ENCODE measurements at regions of chr2 and their contacts with region 1.

Region 1: GRCh38 chr2:9333591-9334171 is 89.6 kb downstream of the ITGB1BP1 start:
- DNase-seq: peak; percentile 70 to 83
- ATAC-seq: peak; percentile 96
- H3K4me3 ChIP-seq: no peak overlapping the region
- H3K27ac ChIP-seq: peak overlapping the region; percentile 27 to 51; a peak in 3 of 6 replicates
- H3K4me1 ChIP-seq: peaks cover 15% of the 10 kb centered on the region
- CTCF ChIP-seq: peak; percentile 88
- EP300 ChIP-seq: no peak
- POLR2A ChIP-seq: no peak
- RAD21 ChIP-seq: peak; percentile 92 to 93

Region 2: DNA sequence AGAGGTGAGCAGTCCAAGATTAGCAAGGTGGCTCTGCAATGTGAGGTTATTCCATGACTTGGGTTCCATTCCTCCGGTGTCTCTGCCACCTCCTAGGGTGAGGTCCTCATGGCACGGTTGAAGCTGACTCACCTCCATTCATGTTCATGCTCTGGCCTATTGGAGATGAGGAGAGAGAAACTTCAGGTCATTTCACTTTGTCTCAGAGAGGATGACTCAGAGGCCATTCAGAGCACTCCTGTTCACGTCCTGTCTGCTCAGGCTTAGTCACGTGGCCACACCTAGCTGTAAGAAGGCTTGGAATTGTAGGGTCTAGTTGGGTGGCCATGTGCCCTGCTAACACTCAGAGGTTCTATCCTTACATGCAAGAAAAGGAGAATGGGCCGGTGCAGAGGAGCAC is 262.6 kb before region 1 on chr2:
- CTCF ChIA-PET with region 1: no interaction called
- POLR2A ChIA-PET with region 1: no interaction called
- DNase-seq: peak; percentile 86 to 96
- ATAC-seq: peak; percentile 98
- H3K4me3 ChIP-seq: no peak overlapping the region
- H3K27ac ChIP-seq: peak overlapping the region; percentile 75 to 84
- H3K4me1 ChIP-seq: peaks cover 21% of the 10 kb centered on the region
- CTCF ChIP-seq: no peak
- EP300 ChIP-seq: peak in 1 of 2 experiments; percentile 30; a peak in 1 of 5 replicates
- POLR2A ChIP-seq: no peak
- RAD21 ChIP-seq: no peak

Region 3: DNA sequence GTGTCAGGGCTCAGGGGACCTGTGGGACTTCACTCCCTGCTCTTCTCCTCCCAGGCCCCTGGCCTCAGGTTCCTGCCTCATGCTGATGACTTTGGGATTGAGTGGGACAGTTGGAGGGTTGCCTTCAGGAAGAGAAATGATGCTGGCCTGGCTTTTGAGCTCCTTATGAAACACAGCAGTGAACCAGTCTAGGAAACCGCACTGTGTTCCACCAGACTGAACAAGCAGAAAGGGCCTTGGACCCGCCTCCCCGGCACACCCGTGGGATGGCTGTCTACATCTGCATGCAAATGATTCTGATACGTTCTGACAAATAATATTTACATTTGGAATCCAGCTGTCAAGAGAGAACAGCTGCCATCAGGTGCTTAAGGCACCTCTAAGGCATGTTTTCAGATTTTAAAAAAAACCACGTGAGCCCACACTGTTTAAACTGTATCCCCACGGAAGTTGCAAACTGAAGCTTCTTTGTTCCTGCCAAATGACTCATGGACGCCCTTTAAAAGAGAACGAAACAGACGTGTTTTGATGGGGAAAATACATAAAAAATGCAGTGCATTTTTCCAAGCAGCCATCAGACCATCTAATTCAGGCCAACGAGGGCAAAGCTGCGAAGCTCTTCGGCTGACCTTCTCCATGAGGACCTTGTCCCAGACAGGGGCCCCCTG is 154.6 kb before region 1 on chr2:
- CTCF ChIA-PET with region 1: interaction called, 10 read pairs
- POLR2A ChIA-PET with region 1: no interaction called
- DNase-seq: peak in 1 of 2 experiments; percentile 26
- ATAC-seq: peak; percentile 27 to 56; a peak in 4 of 6 replicates
- H3K4me3 ChIP-seq: no peak overlapping the region
- H3K27ac ChIP-seq: peak overlapping the region; percentile 37 to 50; a peak in 5 of 6 replicates
- H3K4me1 ChIP-seq: peaks cover 23% of the 10 kb centered on the region
- CTCF ChIP-seq: no peak
- EP300 ChIP-seq: no peak
- POLR2A ChIP-seq: no peak
- RAD21 ChIP-seq: no peak

Region 4: GRCh38 chr2:9287400-9288043 is 46.2 kb before region 1 on chr2:
- CTCF ChIA-PET with region 1: interaction called, 20 read pairs
- POLR2A ChIA-PET with region 1: no interaction called
- DNase-seq: peak; percentile 94 to 99
- ATAC-seq: peak; percentile 94 to 95
- H3K4me3 ChIP-seq: no peak overlapping the region; the same call in 1 of the 3 replicates
- H3K27ac ChIP-seq: peak overlapping the region; percentile 86 to 87
- H3K4me1 ChIP-seq: peaks cover 58% of the 10 kb centered on the region
- CTCF ChIP-seq: peak; percentile 21; the same call in 1 of the 3 replicates
- EP300 ChIP-seq: peak; percentile 52 to 61; a peak in 2 of 5 replicates
- POLR2A ChIP-seq: no peak
- RAD21 ChIP-seq: peak in 1 of 2 experiments; percentile 41; a peak in 4 of 5 replicates

Region 5: DNA sequence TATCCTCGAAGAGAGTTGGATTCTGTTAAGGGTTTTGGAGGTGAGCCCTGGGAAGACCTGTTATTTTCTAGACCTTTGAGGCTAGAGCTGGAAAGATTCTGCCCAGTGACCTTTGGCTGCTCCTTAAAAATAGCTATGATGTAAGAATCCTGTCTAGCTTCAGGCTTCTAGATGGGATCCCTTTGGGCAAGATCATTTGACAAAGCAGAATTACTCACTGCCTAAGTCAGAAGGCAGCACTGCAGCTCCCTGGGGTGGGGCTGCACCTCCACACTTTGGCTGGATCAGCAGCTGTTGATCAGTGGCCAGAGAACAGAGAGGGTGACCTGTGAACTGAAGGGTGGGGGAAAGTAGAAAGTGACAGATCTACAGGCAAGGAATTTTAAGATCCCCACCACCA is 23.3 kb before region 1 on chr2:
- CTCF ChIA-PET with region 1: interaction called, 24 read pairs
- POLR2A ChIA-PET with region 1: interaction called, 5 read pairs
- DNase-seq: peak; percentile 66 to 81
- ATAC-seq: peak; percentile 89 to 91
- H3K4me3 ChIP-seq: no peak overlapping the region
- H3K27ac ChIP-seq: peak overlapping the region; percentile 67 to 86
- H3K4me1 ChIP-seq: peaks cover 55% of the 10 kb centered on the region
- CTCF ChIP-seq: no peak
- EP300 ChIP-seq: peak in 1 of 2 experiments; percentile 20; a peak in 1 of 5 replicates
- POLR2A ChIP-seq: no peak
- RAD21 ChIP-seq: peak in 1 of 2 experiments; percentile 26; a peak in 2 of 5 replicates

Region 6: DNA sequence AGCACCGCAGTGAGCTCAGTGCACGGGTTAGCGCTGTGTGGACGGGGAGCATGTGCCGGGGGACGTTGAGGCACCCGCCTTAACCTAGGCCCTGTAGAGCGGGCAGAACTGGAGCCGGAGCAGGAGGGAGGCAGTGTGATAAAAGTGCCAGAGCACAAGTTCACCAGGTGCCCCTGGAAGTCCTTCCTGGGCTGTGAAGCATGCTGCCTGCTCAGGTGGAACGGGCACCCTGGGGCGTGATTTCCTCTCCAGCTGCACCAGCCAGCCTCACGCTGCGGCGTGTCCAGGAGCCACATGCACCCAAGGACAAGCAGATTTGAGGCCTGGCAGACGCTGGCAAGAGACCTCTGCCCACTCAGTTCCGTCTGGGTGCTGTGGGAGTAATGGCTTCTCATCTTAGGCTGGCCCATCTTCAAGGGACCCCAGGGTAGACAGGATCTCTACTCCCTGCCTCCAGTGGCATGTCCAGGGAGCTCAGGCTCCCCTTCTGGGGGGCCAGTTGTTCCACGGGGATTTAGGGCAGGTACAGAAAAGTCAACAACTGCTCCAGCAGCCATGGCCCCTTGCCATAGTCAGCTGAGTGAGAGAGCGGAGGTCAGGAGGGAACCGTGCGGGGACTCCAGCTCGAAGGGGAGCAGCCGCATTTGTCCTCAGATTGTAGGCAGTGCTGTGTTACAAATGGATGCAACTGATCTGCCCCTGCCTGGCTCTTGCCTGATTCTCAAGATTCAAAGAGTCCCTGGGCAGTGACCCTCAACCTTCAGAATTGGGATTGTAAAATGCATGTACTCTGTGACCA is 39.6 kb after region 1 on chr2:
- CTCF ChIA-PET with region 1: interaction called, 17 read pairs
- POLR2A ChIA-PET with region 1: no interaction called
- DNase-seq: no peak
- ATAC-seq: no peak
- H3K4me3 ChIP-seq: no peak overlapping the region
- H3K27ac ChIP-seq: no peak overlapping the region
- H3K4me1 ChIP-seq: peaks cover 11% of the 10 kb centered on the region
- CTCF ChIP-seq: no peak
- EP300 ChIP-seq: no peak
- POLR2A ChIP-seq: no peak
- RAD21 ChIP-seq: no peak

Region 7: DNA sequence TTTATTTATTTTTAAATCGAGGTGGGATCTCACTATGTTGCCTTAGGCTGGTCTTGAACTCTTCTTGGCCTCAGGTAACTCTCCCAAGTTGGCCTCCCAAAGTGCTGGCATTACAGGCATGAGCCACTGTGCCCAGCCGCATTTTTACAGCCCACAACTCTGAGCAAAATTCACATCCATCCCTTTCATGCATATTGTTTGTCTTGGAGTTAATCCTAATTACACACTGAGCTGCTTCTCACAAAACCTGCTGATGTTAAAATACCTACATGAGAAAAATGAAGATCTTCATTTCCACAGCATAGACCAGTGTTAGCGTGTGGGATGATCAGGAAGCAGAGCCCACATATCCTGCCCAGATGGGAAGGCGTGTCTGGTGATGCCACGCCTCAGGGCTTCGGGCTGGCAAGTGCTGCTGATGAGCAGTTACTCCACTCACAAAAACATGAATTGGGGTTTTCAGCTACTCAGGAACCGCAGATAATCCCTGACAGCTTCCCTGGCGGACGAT is 75.0 kb after region 1 on chr2:
- CTCF ChIA-PET with region 1: no interaction called
- POLR2A ChIA-PET with region 1: no interaction called
- DNase-seq: no peak
- ATAC-seq: peak; percentile 42 to 49; a peak in 3 of 6 replicates
- H3K4me3 ChIP-seq: no peak overlapping the region
- H3K27ac ChIP-seq: no peak overlapping the region
- H3K4me1 ChIP-seq: peaks cover 8% of the 10 kb centered on the region; the same call in 1 of the 3 replicates
- CTCF ChIP-seq: no peak
- EP300 ChIP-seq: no peak
- POLR2A ChIP-seq: no peak
- RAD21 ChIP-seq: no peak

Region 8: DNA sequence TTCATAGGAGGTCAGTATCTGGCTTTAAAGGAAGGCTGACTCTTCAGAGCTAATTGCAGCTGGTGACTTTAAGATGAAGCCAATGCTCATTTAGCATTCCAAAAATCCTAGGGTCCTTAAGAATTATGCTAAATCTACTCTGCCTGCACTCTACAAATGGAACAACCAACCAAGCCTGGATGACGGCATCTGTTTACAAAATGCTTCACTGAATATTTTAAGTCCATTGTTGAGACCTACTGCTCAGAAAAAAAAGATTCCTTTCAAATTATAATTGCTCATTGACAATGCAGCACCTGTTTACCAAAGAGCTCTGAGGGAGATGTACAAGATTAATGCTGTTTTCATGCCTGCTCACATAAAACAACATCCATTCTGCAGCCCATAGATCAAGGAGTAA is 265.7 kb after region 1 on chr2:
- CTCF ChIA-PET with region 1: no interaction called
- POLR2A ChIA-PET with region 1: no interaction called
- DNase-seq: no peak
- ATAC-seq: no peak
- H3K4me3 ChIP-seq: no peak overlapping the region
- H3K27ac ChIP-seq: no peak overlapping the region
- H3K4me1 ChIP-seq: peaks cover 27% of the 10 kb centered on the region
- CTCF ChIP-seq: no peak
- EP300 ChIP-seq: no peak
- POLR2A ChIP-seq: no peak
- RAD21 ChIP-seq: no peak